GM23248 (cell line): ENCODE measurements at regions of chr10 and their contacts with region 1.

Region 1: GRCh38 chr10:3248888-3249758 is 76.5 kb upstream of the PITRM1 start:
- DNase-seq: peak; percentile 97
- H3K4me3 ChIP-seq: peak overlapping the region; percentile 34
- H3K27ac ChIP-seq: peak overlapping the region; percentile 78
- H3K4me1 ChIP-seq: peaks cover 13% of the 10 kb centered on the region
- H3K27me3 ChIP-seq: peaks cover 7% of the 10 kb centered on the region; the same call in 1 of the 2 replicates

Region 2: GRCh38 chr10:3467052-3467951 is 218.2 kb after region 1 on chr10:
- in situ Hi-C with region 1: loop called (anchors 10 kb)
- DNase-seq: peak; percentile 98
- H3K4me3 ChIP-seq: peak overlapping the region; percentile 61
- H3K27ac ChIP-seq: peak overlapping the region; percentile 99
- H3K4me1 ChIP-seq: peaks cover 29% of the 10 kb centered on the region
- H3K27me3 ChIP-seq: no peaks in the 10 kb centered on the region

Region 3: DNA sequence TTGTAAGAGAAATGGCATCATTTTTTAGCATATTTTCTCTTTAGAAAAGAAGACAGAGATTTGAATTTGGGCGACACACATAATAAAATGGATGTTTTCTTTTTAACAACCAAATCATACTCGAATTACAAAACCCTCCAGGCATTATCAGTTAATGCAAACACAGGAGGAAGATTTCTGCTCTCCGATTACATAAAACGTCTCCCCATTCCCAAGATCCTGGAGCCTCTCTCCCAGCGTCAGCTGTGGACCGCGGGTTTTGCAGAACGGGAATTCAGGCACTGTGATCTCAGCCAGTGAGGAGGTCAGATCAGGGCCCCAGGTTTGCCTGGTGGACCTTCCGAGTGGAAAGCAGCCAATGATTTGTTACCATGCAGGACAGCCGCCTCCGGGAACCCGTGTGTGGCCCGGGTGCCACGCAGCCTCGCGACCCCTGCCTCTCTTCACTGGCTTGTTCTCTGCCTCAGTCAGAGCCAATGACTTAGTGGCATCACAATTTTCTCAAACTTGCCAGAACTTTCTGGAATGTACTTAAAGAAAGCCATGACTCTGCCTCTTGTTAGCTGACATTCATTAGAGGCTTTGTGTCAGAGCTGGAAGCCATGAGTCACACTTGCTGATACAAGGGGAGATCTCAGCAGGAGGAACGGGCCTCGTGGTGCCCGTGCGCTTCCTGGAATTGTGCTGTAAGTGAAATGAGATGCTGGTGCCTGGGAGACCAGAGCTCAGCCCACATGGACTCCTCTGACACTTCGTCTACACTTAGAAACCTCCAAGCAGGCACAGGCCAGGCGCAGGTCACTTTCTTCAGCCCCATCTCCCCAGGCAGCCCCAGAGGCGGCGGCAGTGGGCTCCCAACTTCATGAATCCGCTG is 289.8 kb after region 1 on chr10:
- in situ Hi-C with region 1: no loop called
- DNase-seq: peak; percentile 99
- H3K4me3 ChIP-seq: peak overlapping the region; percentile 51
- H3K27ac ChIP-seq: peak overlapping the region; percentile 94
- H3K4me1 ChIP-seq: peaks cover 41% of the 10 kb centered on the region
- H3K27me3 ChIP-seq: no peaks in the 10 kb centered on the region

Region 4: DNA sequence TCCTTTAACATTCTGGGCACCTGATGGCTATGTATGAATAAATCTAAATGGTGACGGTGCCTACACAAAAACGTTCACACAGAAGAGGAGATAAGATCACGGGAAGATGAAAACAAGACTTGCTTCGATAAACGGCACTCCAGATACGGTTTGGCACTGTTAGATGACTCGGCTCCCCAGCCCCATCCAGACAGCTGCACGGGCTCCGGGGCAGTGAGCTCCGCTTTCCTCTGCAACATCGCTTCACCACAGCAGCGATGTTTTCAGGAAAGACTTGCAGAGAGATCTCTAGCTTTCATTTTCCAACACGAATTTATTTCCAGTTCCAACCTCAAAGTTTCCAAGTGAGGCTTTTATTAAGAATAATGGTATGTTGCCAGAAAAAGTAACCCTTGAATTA is 403.8 kb after region 1 on chr10:
- in situ Hi-C with region 1: no loop called
- DNase-seq: peak; percentile 61
- H3K4me3 ChIP-seq: peak overlapping the region; percentile 66
- H3K27ac ChIP-seq: no peak overlapping the region
- H3K4me1 ChIP-seq: peaks cover 7% of the 10 kb centered on the region; the same call in 1 of the 2 replicates
- H3K27me3 ChIP-seq: no peaks in the 10 kb centered on the region

Region 5: GRCh38 chr10:3776796-3777571 is 527.9 kb after region 1 on chr10:
- in situ Hi-C with region 1: loop called (anchors 10 kb)
- DNase-seq: peak; percentile 93
- H3K4me3 ChIP-seq: peak overlapping the region; percentile 23
- H3K27ac ChIP-seq: peak overlapping the region; percentile 100
- H3K4me1 ChIP-seq: peaks cover 56% of the 10 kb centered on the region
- H3K27me3 ChIP-seq: no peaks in the 10 kb centered on the region